PC-9 (cell line): ENCODE measurements at regions of chr1 and their contacts with region 1.

Region 1: DNA sequence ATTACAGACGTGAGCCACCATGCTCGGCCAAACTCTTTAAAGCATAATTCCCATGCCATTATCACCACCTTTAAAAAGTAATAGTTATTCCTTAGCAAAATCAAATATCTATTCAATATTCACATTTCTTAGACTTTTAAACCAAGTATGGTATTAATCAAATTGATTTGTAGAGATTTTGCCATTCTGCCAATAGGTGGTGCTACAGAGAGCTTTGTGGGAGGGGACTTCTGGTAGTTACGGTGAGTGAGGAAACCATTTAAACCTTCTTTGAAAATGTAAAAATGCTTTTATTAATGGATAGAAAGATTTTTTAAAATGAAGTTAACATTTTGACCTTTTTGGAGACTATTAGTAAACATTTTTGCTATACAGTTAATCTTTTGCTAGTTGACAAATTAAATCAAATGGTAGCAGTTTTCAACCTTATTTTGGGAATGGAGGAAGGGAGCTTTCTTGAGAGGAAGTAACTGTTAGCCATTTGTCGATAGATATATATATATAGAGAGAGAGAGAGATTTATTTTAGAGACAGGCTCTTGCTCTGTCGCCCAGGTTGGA is 19.3 kb downstream of the IARS2 start:
- DNase-seq: no peak
- H3K4me3 ChIP-seq: no peak overlapping the region
- H3K27ac ChIP-seq: no peak overlapping the region
- H3K4me1 ChIP-seq: no peaks in the 10 kb centered on the region
- H3K27me3 ChIP-seq: no peaks in the 10 kb centered on the region
- CTCF ChIP-seq: peak; percentile 56

Region 2: GRCh38 chr1:219906924-219907771 is 206.1 kb before region 1 on chr1:
- CTCF ChIA-PET with region 1: no interaction called
- POLR2A ChIA-PET with region 1: no interaction called
- intact Hi-C with region 1: no loop called
- DNase-seq: no peak
- H3K4me3 ChIP-seq: no peak overlapping the region
- H3K27ac ChIP-seq: no peak overlapping the region
- H3K4me1 ChIP-seq: no peaks in the 10 kb centered on the region
- H3K27me3 ChIP-seq: no peaks in the 10 kb centered on the region
- CTCF ChIP-seq: no peak

Region 3: GRCh38 chr1:220159041-220159440 is 45.8 kb after region 1 on chr1:
- CTCF ChIA-PET with region 1: no interaction called
- POLR2A ChIA-PET with region 1: interaction called, 20 read pairs
- intact Hi-C with region 1: no loop called
- DNase-seq: no peak
- H3K4me3 ChIP-seq: no peak overlapping the region
- H3K27ac ChIP-seq: no peak overlapping the region
- H3K4me1 ChIP-seq: no peaks in the 10 kb centered on the region
- H3K27me3 ChIP-seq: no peaks in the 10 kb centered on the region
- CTCF ChIP-seq: no peak

Region 4: DNA sequence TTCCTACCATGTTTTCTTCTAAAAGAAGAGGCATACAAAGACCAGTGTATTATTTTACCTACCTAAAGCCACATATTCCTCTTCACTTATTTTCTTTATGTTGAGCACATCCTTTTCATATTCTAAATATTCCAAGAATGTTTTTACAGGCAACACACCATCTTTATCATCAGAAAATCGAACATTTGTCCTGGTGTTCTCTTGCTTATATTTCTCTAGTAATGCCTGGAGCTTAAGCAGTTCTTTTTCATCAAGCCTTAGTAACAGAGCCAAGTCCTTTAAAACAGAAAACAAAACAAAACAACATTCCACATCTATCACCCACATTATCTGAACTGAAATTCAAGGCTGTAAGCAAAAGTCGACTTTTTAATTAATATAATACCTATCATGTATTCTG is 69.4 kb after region 1 on chr1:
- CTCF ChIA-PET with region 1: no interaction called
- POLR2A ChIA-PET with region 1: no interaction called
- intact Hi-C with region 1: no loop called
- DNase-seq: no peak
- H3K4me3 ChIP-seq: no peak overlapping the region
- H3K27ac ChIP-seq: no peak overlapping the region
- H3K4me1 ChIP-seq: no peaks in the 10 kb centered on the region
- H3K27me3 ChIP-seq: no peaks in the 10 kb centered on the region
- CTCF ChIP-seq: no peak